Caco-2 (cell line): ENCODE measurements at regions of chr6 and their contacts with region 1.

Region 1: GRCh38 chr6:78062992-78063391 is 410.2 kb downstream of the MEI4 start:
- DNase-seq: no peak
- H3K4me3 ChIP-seq: no peak overlapping the region
- H3K4me3 Mint-ChIP-seq: no peak overlapping the region
- H3K27ac Mint-ChIP-seq: no peak overlapping the region
- H3K4me1 ChIP-seq: peaks cover 16% of the 10 kb centered on the region
- H3K4me1 Mint-ChIP-seq: peaks cover 13% of the 10 kb centered on the region
- H3K27me3 ChIP-seq: no peaks in the 10 kb centered on the region
- H3K27me3 Mint-ChIP-seq: no peaks in the 10 kb centered on the region
- CTCF ChIP-seq: no peak

Region 2: GRCh38 chr6:78025501-78025900 is 37.5 kb before region 1 on chr6:
- CTCF ChIA-PET with region 1: no interaction called
- POLR2A ChIA-PET with region 1: no interaction called
- intact Hi-C with region 1: loop called (anchors 2 kb)
- DNase-seq: no peak
- H3K4me3 ChIP-seq: no peak overlapping the region
- H3K4me3 Mint-ChIP-seq: no peak overlapping the region
- H3K27ac Mint-ChIP-seq: no peak overlapping the region
- H3K4me1 ChIP-seq: peaks cover 17% of the 10 kb centered on the region
- H3K4me1 Mint-ChIP-seq: peaks cover 11% of the 10 kb centered on the region
- H3K27me3 ChIP-seq: no peaks in the 10 kb centered on the region
- H3K27me3 Mint-ChIP-seq: no peaks in the 10 kb centered on the region
- CTCF ChIP-seq: no peak

Region 3: GRCh38 chr6:78076371-78076770 is 13.4 kb after region 1 on chr6:
- CTCF ChIA-PET with region 1: no interaction called
- POLR2A ChIA-PET with region 1: no interaction called
- intact Hi-C with region 1: no loop called
- DNase-seq: no peak
- H3K4me3 ChIP-seq: no peak overlapping the region
- H3K4me3 Mint-ChIP-seq: no peak overlapping the region
- H3K27ac Mint-ChIP-seq: no peak overlapping the region
- H3K4me1 ChIP-seq: no peaks in the 10 kb centered on the region
- H3K4me1 Mint-ChIP-seq: no peaks in the 10 kb centered on the region
- H3K27me3 ChIP-seq: no peaks in the 10 kb centered on the region
- H3K27me3 Mint-ChIP-seq: no peaks in the 10 kb centered on the region
- CTCF ChIP-seq: no peak

Region 4: GRCh38 chr6:78132671-78133410 is 69.8 kb after region 1 on chr6:
- CTCF ChIA-PET with region 1: no interaction called
- POLR2A ChIA-PET with region 1: no interaction called
- intact Hi-C with region 1: loop called (anchors 2 kb)
- DNase-seq: peak; percentile 47 to 50
- H3K4me3 ChIP-seq: no peak overlapping the region
- H3K4me3 Mint-ChIP-seq: peak overlapping the region; percentile 17
- H3K27ac Mint-ChIP-seq: peak overlapping the region; percentile 94
- H3K4me1 ChIP-seq: peaks cover 24% of the 10 kb centered on the region
- H3K4me1 Mint-ChIP-seq: peaks cover 15% of the 10 kb centered on the region
- H3K27me3 ChIP-seq: no peaks in the 10 kb centered on the region
- H3K27me3 Mint-ChIP-seq: no peaks in the 10 kb centered on the region
- CTCF ChIP-seq: no peak